WTC11 (cell line): ENCODE measurements at regions of chr2 and their contacts with region 1.

Region 1: GRCh38 chr2:152036611-152037469 is 62.0 kb downstream of the CACNB4 start:
- DNase-seq: peak; percentile 78
- ATAC-seq: peak; percentile 47
- H3K4me3 Mint-ChIP-seq: no peak overlapping the region
- H3K27ac Mint-ChIP-seq: no peak overlapping the region
- H3K4me1 Mint-ChIP-seq: peaks cover 51% of the 10 kb centered on the region
- H3K27me3 Mint-ChIP-seq: peaks cover 22% of the 10 kb centered on the region
- CTCF ChIP-seq: peak; percentile 51

Region 2: GRCh38 chr2:152047819-152048471 is 11.1 kb after region 1 on chr2:
- CTCF ChIA-PET with region 1: interaction called, 14 read pairs
- POLR2A ChIA-PET with region 1: interaction called, 3 read pairs
- DNase-seq: no peak
- ATAC-seq: peak; percentile 53
- H3K4me3 Mint-ChIP-seq: no peak overlapping the region
- H3K27ac Mint-ChIP-seq: no peak overlapping the region
- H3K4me1 Mint-ChIP-seq: peaks cover 56% of the 10 kb centered on the region
- H3K27me3 Mint-ChIP-seq: peaks cover 15% of the 10 kb centered on the region
- CTCF ChIP-seq: peak; percentile 34

Region 3: GRCh38 chr2:152175458-152176325 is 138.9 kb after region 1 on chr2 and contains the start of gene STAM2:
- CTCF ChIA-PET with region 1: interaction called, 11 read pairs
- POLR2A ChIA-PET with region 1: no interaction called
- DNase-seq: peak; percentile 93
- ATAC-seq: peak; percentile 88
- H3K4me3 Mint-ChIP-seq: peak within 1 kb of the TSS; percentile 93
- H3K27ac Mint-ChIP-seq: peak within 1 kb of the TSS; percentile 99
- H3K4me1 Mint-ChIP-seq: peaks cover 10% of the 10 kb centered on the region
- H3K27me3 Mint-ChIP-seq: peaks cover 20% of the 10 kb centered on the region
- CTCF ChIP-seq: peak; percentile 91
- total RNA-seq, gene STAM2: 9.0 to 12.0 TPM (median 11.1 TPM) in 3 replicates

Region 4: GRCh38 chr2:152635635-152636298 is 598.9 kb after region 1 on chr2:
- CTCF ChIA-PET with region 1: interaction called, 18 read pairs
- POLR2A ChIA-PET with region 1: no interaction called
- DNase-seq: peak; percentile 78
- ATAC-seq: peak; percentile 90
- H3K4me3 Mint-ChIP-seq: no peak overlapping the region
- H3K27ac Mint-ChIP-seq: no peak overlapping the region
- H3K4me1 Mint-ChIP-seq: no peaks in the 10 kb centered on the region
- H3K27me3 Mint-ChIP-seq: no peaks in the 10 kb centered on the region
- CTCF ChIP-seq: peak; percentile 86